Naive thymus-derived CD4-positive, alpha-beta T cell (primary cell): ENCODE measurements at regions of chr2 and their contacts with region 1.

Region 1: DNA sequence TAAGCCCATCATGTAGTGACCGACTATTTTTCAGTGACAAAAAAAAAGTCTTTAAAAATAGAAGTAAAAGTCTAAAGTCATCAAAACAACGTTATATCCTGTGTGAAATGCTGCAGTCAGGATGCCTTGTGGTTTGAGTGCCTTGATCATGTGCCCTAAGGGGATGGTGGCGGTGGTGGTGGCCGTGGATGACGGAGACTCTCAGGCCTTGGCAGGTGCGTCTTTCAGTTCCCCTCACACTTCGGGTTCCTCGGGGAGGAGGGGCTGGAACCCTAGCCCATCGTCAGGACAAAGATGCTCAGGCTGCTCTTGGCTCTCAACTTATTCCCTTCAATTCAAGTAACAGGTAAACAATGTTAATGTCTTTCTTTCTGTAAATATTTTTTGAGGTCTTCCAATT is at the start of gene CD28:
- DNase-seq: peak; percentile 59 to 96 (median 94)
- ATAC-seq: peak; percentile 90
- H3K4me3 ChIP-seq: peak within 1 kb of the TSS; percentile 70
- H3K4me3 Mint-ChIP-seq: peak within 1 kb of the TSS; percentile 82 to 97 (median 94)
- H3K27ac ChIP-seq: peak within 1 kb of the TSS; percentile 95
- H3K27ac Mint-ChIP-seq: peak within 1 kb of the TSS; percentile 92 to 99 (median 97)
- H3K4me1 ChIP-seq: peaks cover 30 to 39% of the 10 kb centered on the region in 2 donors
- H3K4me1 Mint-ChIP-seq: peaks cover 13 to 50% (median 41%) of the 10 kb centered on the region in 7 donors
- H3K27me3 ChIP-seq: no peaks in the 10 kb centered on the region
- H3K27me3 Mint-ChIP-seq: no peaks in the 10 kb centered on the region
- total RNA-seq, gene CD28: 66.7 to 224 (median 121) TPM

Region 2: GRCh38 chr2:203535078-203535783 is 171.2 kb before region 1 on chr2 and contains the start of gene RAPH1:
- CTCF ChIA-PET with region 1: interaction called, 4 read pairs
- POLR2A ChIA-PET with region 1: interaction called, 7 read pairs
- intact Hi-C with region 1: loop called (anchors 2 kb)
- DNase-seq: peak; percentile 24 to 72 (median 51)
- ATAC-seq: peak; percentile 77
- H3K4me3 ChIP-seq: peak within 1 kb of the TSS; percentile 71
- H3K4me3 Mint-ChIP-seq: peak within 1 kb of the TSS; percentile 79 to 95 (median 90)
- H3K27ac ChIP-seq: peak within 1 kb of the TSS; percentile 49
- H3K27ac Mint-ChIP-seq: peak within 1 kb of the TSS; percentile 32 to 90 (median 73)
- H3K4me1 ChIP-seq: peaks cover 10 to 15% of the 10 kb centered on the region in 2 donors
- H3K4me1 Mint-ChIP-seq: peaks cover 16 to 30% (median 28%) of the 10 kb centered on the region in 7 donors
- H3K27me3 ChIP-seq: no peaks in the 10 kb centered on the region
- H3K27me3 Mint-ChIP-seq: peaks cover 6 to 75% (median 16%) of the 10 kb centered on the region in 5 donors
- total RNA-seq, gene RAPH1: 1.8 to 5.5 (median 3.0) TPM

Region 3: DNA sequence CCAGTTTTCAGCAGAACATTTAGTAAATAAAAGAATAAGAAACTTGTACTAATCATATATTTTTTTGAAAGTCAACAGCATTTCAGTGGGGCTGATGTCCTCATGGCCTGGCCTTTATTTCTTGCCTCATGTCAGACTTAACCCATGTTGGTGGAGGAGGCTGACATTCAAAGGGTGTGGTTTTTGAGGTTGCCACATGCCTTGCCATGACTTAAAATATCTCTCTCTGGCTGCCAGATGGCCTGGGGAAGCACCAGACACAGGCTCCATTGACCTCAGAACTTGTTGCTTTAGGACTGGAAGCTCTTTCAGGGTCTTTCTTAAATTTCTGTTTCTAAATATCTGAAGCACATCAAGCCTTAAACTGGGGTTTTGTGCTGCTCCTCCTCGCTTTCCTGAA is 32.5 kb before region 1 on chr2:
- CTCF ChIA-PET with region 1: interaction called, 3 read pairs
- POLR2A ChIA-PET with region 1: interaction called, 4 read pairs
- intact Hi-C with region 1: loop called in 1 of 2 experiments (anchors 2 kb)
- DNase-seq: peak in 1 of 9 donors; percentile 56
- ATAC-seq: peak; percentile 73
- H3K4me3 ChIP-seq: no peak overlapping the region
- H3K4me3 Mint-ChIP-seq: peak overlapping the region in 1 of 10 donors; percentile 46
- H3K27ac ChIP-seq: no peak overlapping the region
- H3K27ac Mint-ChIP-seq: peak overlapping the region in 1 of 9 donors; percentile 56
- H3K4me1 ChIP-seq: peaks cover 4 to 6% of the 10 kb centered on the region in 2 donors
- H3K4me1 Mint-ChIP-seq: peaks cover 10 to 35% (median 25%) of the 10 kb centered on the region in 7 donors
- H3K27me3 ChIP-seq: no peaks in the 10 kb centered on the region
- H3K27me3 Mint-ChIP-seq: no peaks in the 10 kb centered on the region

Region 4: DNA sequence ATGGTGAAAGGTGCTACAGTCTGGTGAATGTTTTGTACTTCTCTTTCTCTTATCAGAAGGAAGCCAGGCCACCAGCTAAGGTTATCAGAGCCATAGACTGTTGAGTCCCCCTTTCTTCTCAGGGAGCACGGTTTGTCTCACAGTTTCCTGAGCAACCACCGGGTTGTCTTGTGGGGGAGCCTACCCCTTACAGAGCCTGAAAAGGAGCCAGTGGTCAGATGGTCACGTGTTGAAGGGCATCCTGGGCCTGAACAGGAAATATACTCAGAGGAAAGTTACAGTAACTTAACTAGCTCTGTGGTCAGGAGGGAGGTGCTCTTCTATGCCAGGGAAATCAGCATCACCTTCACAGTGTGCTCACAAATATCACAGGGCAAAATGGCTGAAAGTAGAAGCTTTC is 11.7 kb after region 1 on chr2:
- CTCF ChIA-PET with region 1: interaction called, 16 read pairs
- POLR2A ChIA-PET with region 1: interaction called, 243 read pairs
- intact Hi-C with region 1: loop called (anchors 1 kb)
- DNase-seq: peak in 8 of 9 donors; percentile 45 to 62 (median 60)
- ATAC-seq: peak; percentile 49
- H3K4me3 ChIP-seq: peak overlapping the region; percentile 29
- H3K4me3 Mint-ChIP-seq: peak overlapping the region; percentile 23 to 91 (median 80)
- H3K27ac ChIP-seq: peak overlapping the region; percentile 71
- H3K27ac Mint-ChIP-seq: peak overlapping the region; percentile 90 to 99 (median 97)
- H3K4me1 ChIP-seq: peaks cover 89 to 95% of the 10 kb centered on the region in 2 donors
- H3K4me1 Mint-ChIP-seq: peaks cover 77 to 100% (median 95%) of the 10 kb centered on the region in 7 donors
- H3K27me3 ChIP-seq: no peaks in the 10 kb centered on the region
- H3K27me3 Mint-ChIP-seq: no peaks in the 10 kb centered on the region

Region 5: DNA sequence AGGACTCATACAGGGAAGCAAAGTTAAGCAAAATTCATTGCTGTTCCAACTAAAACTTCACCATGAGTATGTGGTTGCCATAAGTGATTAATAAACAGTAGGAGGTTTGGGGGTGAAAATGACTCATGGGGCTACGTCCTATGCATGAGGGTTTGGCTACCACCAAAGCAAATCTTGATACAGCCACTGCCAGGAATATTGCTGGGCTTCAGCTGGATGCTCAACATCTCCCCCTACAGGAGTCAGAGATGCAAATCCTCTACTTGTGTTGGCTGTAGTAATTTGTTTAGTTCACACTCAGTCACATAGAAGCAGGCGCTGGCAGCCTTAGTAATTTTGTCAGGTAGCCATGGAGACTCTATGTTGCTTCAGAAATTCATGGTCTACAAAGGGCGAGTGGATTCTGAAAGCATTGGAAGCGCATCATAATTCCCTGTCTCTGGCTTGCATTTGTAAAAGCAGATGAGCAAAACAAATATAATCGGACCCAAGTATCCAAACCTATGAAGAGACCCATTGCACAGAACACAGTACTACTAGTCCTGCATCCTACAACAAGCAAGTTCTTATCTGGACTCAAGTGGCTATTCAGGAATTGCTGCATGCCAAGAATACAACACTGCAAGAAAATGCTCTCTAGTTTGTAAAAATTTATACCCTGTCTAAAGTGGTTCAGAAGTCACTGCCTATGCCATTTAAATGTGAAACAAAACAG is 76.0 kb after region 1 on chr2:
- CTCF ChIA-PET with region 1: no interaction called
- POLR2A ChIA-PET with region 1: no interaction called
- intact Hi-C with region 1: loop called (anchors 1 kb)
- DNase-seq: peak in 8 of 9 donors; percentile 46 to 73 (median 64)
- ATAC-seq: peak; percentile 92
- H3K4me3 ChIP-seq: no peak overlapping the region
- H3K4me3 Mint-ChIP-seq: peak overlapping the region in 6 of 10 donors; percentile 39 to 63 (median 46)
- H3K27ac ChIP-seq: no peak overlapping the region
- H3K27ac Mint-ChIP-seq: peak overlapping the region; percentile 63 to 85 (median 81)
- H3K4me1 ChIP-seq: peaks cover 17 to 26% of the 10 kb centered on the region in 2 donors
- H3K4me1 Mint-ChIP-seq: peaks cover 11 to 64% (median 53%) of the 10 kb centered on the region in 7 donors
- H3K27me3 ChIP-seq: no peaks in the 10 kb centered on the region
- H3K27me3 Mint-ChIP-seq: no peaks in the 10 kb centered on the region

Region 6: GRCh38 chr2:203934041-203934492 is 227.7 kb after region 1 on chr2:
- CTCF ChIA-PET with region 1: no interaction called
- POLR2A ChIA-PET with region 1: interaction called, 4 read pairs
- intact Hi-C with region 1: loop called (anchors 1 to 5 kb)
- DNase-seq: peak in 8 of 9 donors; percentile 37 to 80 (median 60)
- ATAC-seq: peak; percentile 31
- H3K4me3 ChIP-seq: peak overlapping the region; percentile 22
- H3K4me3 Mint-ChIP-seq: peak overlapping the region; percentile 69 to 92 (median 78)
- H3K27ac ChIP-seq: peak overlapping the region; percentile 71
- H3K27ac Mint-ChIP-seq: peak overlapping the region; percentile 87 to 97 (median 93)
- H3K4me1 ChIP-seq: peaks cover 40 to 42% of the 10 kb centered on the region in 2 donors
- H3K4me1 Mint-ChIP-seq: peaks cover 33 to 68% (median 55%) of the 10 kb centered on the region in 7 donors
- H3K27me3 ChIP-seq: no peaks in the 10 kb centered on the region
- H3K27me3 Mint-ChIP-seq: no peaks in the 10 kb centered on the region